HCT116 (cell line): ENCODE measurements at regions of chr17 and their contacts with region 1.

Region 1: GRCh38 chr17:7060165-7060891 is 16.4 kb upstream of the SLC16A11 start:
- DNase-seq: peak; percentile 96
- ATAC-seq: peak; percentile 89
- H3K4me3 ChIP-seq: peak overlapping the region in 1 of 2 experiments; percentile 36; a peak in 2 of 4 replicates
- H3K27ac ChIP-seq: peak overlapping the region; percentile 53
- H3K4me1 ChIP-seq: peaks cover 16 to 43% of the 10 kb centered on the region in 2 experiments
- H3K27me3 ChIP-seq: peaks cover 4% of the 10 kb centered on the region; the same call in 1 of the 2 replicates
- CTCF ChIP-seq: no peak
- POLR2A ChIP-seq: no peak
- RAD21 ChIP-seq: no peak; the same call in 1 of the 2 replicates

Region 2: GRCh38 chr17:7136266-7136877 is 76.0 kb after region 1 on chr17:
- CTCF ChIA-PET with region 1: interaction called, 62 read pairs
- POLR2A ChIA-PET with region 1: interaction called, 3 read pairs
- RAD21 ChIA-PET with region 1: no interaction called
- intact Hi-C with region 1: no loop called
- DNase-seq: peak; percentile 57
- ATAC-seq: peak; percentile 57
- H3K4me3 ChIP-seq: peak overlapping the region; percentile 33 to 52
- H3K27ac ChIP-seq: no peak overlapping the region
- H3K4me1 ChIP-seq: peaks cover 5 to 14% of the 10 kb centered on the region in 2 experiments
- H3K27me3 ChIP-seq: no peaks in the 10 kb centered on the region
- CTCF ChIP-seq: peak; percentile 91 to 99 (median 93)
- POLR2A ChIP-seq: no peak
- RAD21 ChIP-seq: peak; percentile 94

Region 3: GRCh38 chr17:7486185-7486584 is 425.9 kb after region 1 on chr17:
- CTCF ChIA-PET with region 1: no interaction called
- POLR2A ChIA-PET with region 1: no interaction called
- RAD21 ChIA-PET with region 1: no interaction called
- intact Hi-C with region 1: no loop called
- DNase-seq: no peak
- ATAC-seq: no peak
- H3K4me3 ChIP-seq: peak overlapping the region; percentile 95 to 100; a peak in 2 of 4 replicates
- H3K27ac ChIP-seq: peak overlapping the region; percentile 4; the same call in 1 of the 2 replicates
- H3K4me1 ChIP-seq: peaks cover 9 to 35% of the 10 kb centered on the region in 2 experiments; a peak in 3 of 4 replicates
- H3K27me3 ChIP-seq: no peaks in the 10 kb centered on the region
- CTCF ChIP-seq: no peak
- POLR2A ChIP-seq: no peak
- RAD21 ChIP-seq: no peak